Activated T-helper 1 cell treated with anti-CD3 and anti-CD28 coated beads, Interleukin-12 subunit alpha, Interleukin-12 subunit beta, Interleukin-2, Interleukin-4 antibody, amounts not matched to agents 30 ng/mL and 10 ng/mL and 1 ng/mL, durations not matched to agents 14 hours and 24 hours and 36 hours (primary cell): ENCODE measurements at regions of chr6 and their contacts with region 1.

Region 1: GRCh38 chr6:45703041-45703739 is 312.5 kb downstream of the CLIC5 start:
- DNase-seq: no peak
- H3K4me3 Mint-ChIP-seq: no peak overlapping the region
- H3K27ac Mint-ChIP-seq: peak overlapping the region; percentile 41
- H3K4me1 Mint-ChIP-seq: peaks cover 13% of the 10 kb centered on the region
- H3K27me3 Mint-ChIP-seq: no peaks in the 10 kb centered on the region

Region 2: GRCh38 chr6:45626087-45626891 is 76.9 kb before region 1 on chr6:
- intact Hi-C with region 1: loop called (anchors 1 kb)
- DNase-seq: no peak
- H3K4me3 Mint-ChIP-seq: no peak overlapping the region
- H3K27ac Mint-ChIP-seq: peak overlapping the region; percentile 41
- H3K4me1 Mint-ChIP-seq: peaks cover 36% of the 10 kb centered on the region
- H3K27me3 Mint-ChIP-seq: no peaks in the 10 kb centered on the region